ENCODE measurements at regions of chr20 and their contacts with region 1.

Region 1: GRCh38 chr20:48307277-48307676 is 520.5 kb downstream of the PREX1 start:
- DNase-seq: no peak
- ATAC-seq: no peak
- H3K4me3 ChIP-seq: no peak overlapping the region
- H3K27ac ChIP-seq: no peak overlapping the region
- H3K4me1 ChIP-seq: no peaks in the 10 kb centered on the region
- H3K27me3 ChIP-seq: peaks cover 35% of the 10 kb centered on the region
- CTCF ChIP-seq: no peak

Region 2: DNA sequence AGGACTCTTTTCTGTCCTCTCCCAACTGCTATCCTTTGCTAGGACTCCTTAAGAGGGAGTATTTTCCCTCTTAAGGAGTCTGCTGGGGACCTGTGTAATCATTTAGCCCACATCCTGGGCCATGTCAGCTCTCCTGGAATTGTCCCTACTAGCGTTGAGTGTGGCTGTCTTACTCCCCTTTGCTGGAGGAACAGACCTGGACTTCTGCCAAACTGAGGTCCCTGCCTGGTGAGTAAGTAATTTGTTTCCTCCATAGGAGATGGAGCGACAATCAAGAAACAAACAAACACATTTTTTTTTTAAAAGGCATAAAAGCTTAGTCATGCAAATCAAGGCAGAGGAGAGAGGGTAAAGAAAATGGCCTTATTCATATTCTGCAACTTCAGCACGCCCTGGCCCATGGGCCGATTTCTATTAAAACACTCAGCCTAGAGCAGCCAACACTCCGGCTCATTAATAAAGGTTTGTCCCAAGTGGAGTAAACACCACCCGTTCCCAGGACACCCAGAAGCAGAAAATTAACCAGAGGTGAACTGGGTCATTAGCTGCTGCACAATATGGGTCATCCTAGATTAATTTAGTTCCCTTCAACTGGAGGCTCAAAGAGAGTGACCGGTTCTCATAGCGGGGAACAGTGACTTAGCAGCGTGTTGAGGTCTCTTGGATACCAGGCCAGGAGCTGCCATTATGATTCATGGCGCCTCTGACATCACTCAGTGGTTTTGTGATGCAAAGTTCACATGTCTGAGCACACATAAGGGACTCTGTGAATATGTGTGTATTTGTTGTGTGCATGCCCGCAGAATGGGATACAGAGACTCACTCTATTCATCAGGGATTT is 357.0 kb before region 1 on chr20:
- CTCF ChIA-PET with region 1: no interaction called
- POLR2A ChIA-PET with region 1: interaction called, 12 read pairs
- in situ Hi-C with region 1: no loop called
- intact Hi-C with region 1: no loop called
- DNase-seq: no peak
- ATAC-seq: peak; percentile 58; the same call in 1 of the 2 replicates
- H3K4me3 ChIP-seq: no peak overlapping the region
- H3K27ac ChIP-seq: no peak overlapping the region
- H3K4me1 ChIP-seq: no peaks in the 10 kb centered on the region
- H3K27me3 ChIP-seq: no peaks in the 10 kb centered on the region
- CTCF ChIP-seq: no peak

Region 3: DNA sequence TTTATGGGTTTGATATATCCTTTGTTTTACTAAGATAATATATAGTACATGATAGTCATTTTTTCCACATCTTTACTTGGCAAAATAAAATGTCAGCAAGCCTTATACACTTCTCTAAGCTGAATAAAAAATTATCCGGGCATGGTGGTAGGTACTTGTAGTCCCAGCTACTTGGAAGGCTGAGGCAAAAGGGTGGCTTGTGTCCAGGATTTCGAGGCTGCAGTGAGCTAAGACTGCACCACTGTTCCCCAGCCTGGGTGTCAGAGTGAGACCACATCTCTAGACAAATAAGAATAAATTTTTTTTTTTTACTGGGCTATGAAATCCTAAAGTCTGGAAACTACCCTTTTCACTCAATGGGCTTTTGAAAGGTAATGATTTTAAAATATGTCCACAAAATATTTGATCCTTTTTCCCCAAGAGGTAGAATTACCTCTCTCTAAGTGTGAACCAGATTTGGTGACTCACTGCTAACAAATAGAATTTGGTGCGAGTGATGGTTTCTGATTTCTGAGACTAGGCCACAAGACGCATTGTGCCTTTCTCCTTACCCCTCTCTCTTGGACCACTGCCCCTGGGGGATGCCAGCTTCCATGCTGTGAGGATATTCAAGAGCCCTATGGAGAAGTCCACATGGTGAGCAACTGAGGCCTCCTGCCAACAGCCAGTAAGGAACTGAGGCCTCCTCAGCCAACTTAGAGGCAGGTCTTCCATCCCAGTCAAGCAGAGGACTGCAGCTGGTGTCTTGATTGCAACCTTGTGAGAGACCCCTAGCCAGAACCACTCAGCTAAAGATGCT is 1054.8 kb after region 1 on chr20:
- CTCF ChIA-PET with region 1: no interaction called
- POLR2A ChIA-PET with region 1: no interaction called
- in situ Hi-C with region 1: no loop called
- intact Hi-C with region 1: no loop called
- DNase-seq: no peak
- ATAC-seq: no peak
- H3K4me3 ChIP-seq: no peak overlapping the region
- H3K27ac ChIP-seq: no peak overlapping the region
- H3K4me1 ChIP-seq: peaks cover 2% of the 10 kb centered on the region; the same call in 1 of the 2 replicates
- H3K27me3 ChIP-seq: no peaks in the 10 kb centered on the region
- CTCF ChIP-seq: no peak

Measured in Panc1 (cell line).